Activated CD8-positive, alpha-beta memory T cell treated with anti-CD3 and anti-CD28 coated beads, Interleukin-2, amount 10 ng/mL, durations not matched to agents 7 days and 5 days (primary cell): ENCODE measurements at regions of chr17 and their contacts with region 1.

Region 1: GRCh38 chr17:75784473-75785015 is at the start of gene UNK:
- DNase-seq: peak; percentile 99
- ATAC-seq: peak; percentile 72
- H3K4me3 Mint-ChIP-seq: peak within 1 kb of the TSS; percentile 79
- H3K27ac Mint-ChIP-seq: peak within 1 kb of the TSS; percentile 100
- H3K4me1 Mint-ChIP-seq: peaks cover 50% of the 10 kb centered on the region
- H3K27me3 Mint-ChIP-seq: peaks cover 1% of the 10 kb centered on the region
- total RNA-seq, gene UNK: 32.8 to 33.1 TPM

Region 2: GRCh38 chr17:75743625-75744215 is 40.8 kb before region 1 on chr17:
- CTCF ChIA-PET with region 1: no interaction called
- DNase-seq: no peak
- ATAC-seq: no peak
- H3K4me3 Mint-ChIP-seq: no peak overlapping the region
- H3K27ac Mint-ChIP-seq: no peak overlapping the region
- H3K4me1 Mint-ChIP-seq: peaks cover 3% of the 10 kb centered on the region
- H3K27me3 Mint-ChIP-seq: peaks cover 6% of the 10 kb centered on the region

Region 3: DNA sequence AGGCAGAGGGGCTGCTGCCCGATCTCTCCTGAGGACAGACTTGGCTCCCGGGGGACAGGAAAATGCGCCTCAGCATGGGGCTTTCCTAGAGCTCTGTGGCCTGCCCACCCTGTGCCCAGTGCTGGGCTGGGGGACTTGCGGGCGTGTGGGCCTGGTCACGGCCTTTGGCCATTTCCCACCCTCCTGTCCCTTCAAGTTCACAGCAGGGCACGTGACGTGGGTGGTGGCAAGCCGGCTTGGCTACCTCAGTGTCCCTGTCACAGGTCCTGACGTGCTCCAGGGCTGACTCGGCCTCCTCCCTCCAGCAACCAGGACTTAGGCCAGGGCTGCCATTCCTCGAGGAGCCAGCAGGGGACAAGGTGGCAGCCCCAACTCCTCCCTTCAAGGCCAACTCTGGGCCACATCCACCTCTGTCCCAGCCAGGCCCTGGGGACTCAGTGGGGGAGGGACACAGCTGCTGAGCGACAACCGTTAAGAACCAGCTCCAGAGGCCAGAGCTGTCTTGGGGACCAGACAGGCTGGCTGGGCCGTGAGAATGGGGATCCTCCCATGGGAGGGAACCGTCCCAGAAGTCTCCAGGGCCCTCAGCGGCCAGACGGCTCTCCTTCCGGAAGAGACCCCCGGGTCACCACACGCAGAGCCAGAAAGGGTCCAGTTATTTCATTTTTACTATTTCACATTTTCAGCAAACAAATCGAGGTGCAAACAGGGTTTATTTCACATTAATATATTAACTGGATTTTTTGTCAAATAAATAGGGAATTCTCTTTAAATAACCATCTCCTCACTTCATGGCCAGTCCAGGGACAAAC is 60.7 kb after region 1 on chr17:
- CTCF ChIA-PET with region 1: interaction called, 10 read pairs
- DNase-seq: peak; percentile 79
- ATAC-seq: peak; percentile 52
- H3K4me3 Mint-ChIP-seq: peak overlapping the region; percentile 39
- H3K27ac Mint-ChIP-seq: peak overlapping the region; percentile 61
- H3K4me1 Mint-ChIP-seq: peaks cover 27% of the 10 kb centered on the region
- H3K27me3 Mint-ChIP-seq: no peaks in the 10 kb centered on the region

Region 4: DNA sequence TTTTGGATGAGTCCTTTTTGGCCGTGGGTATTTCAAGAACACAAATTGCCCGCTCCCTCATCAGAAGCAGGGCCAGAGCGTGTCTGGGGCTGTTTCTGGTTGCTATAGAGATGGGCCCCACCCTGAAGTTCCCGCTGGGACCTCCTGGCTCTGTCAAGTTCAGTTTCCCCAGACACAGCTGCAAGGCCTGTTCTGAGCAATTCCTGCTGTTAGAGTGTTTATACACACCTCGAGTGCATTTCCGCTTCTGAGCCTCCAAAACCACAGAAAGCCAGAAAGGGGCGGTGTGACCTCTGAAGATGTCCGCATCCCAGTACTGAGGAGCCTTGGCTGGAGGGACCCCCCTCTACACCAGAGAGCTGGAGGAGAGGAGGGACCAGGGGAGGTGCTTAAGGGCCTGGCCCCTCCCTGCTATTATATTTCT is 79.9 kb after region 1 on chr17:
- CTCF ChIA-PET with region 1: interaction called, 12 read pairs
- DNase-seq: peak; percentile 90
- ATAC-seq: peak; percentile 85
- H3K4me3 Mint-ChIP-seq: peak overlapping the region; percentile 44
- H3K27ac Mint-ChIP-seq: peak overlapping the region; percentile 94
- H3K4me1 Mint-ChIP-seq: peaks cover 22% of the 10 kb centered on the region
- H3K27me3 Mint-ChIP-seq: no peaks in the 10 kb centered on the region

Region 5: GRCh38 chr17:75909812-75910274 is 125.3 kb after region 1 on chr17:
- CTCF ChIA-PET with region 1: no interaction called
- DNase-seq: no peak
- ATAC-seq: no peak
- H3K4me3 Mint-ChIP-seq: no peak overlapping the region
- H3K27ac Mint-ChIP-seq: no peak overlapping the region
- H3K4me1 Mint-ChIP-seq: peaks cover 10% of the 10 kb centered on the region
- H3K27me3 Mint-ChIP-seq: no peaks in the 10 kb centered on the region